Activated CD8-positive, alpha-beta T cell treated with anti-CD3 and anti-CD28 coated beads for 36 hours (primary cell): ENCODE measurements at regions of chr3 and their contacts with region 1.

Region 1: GRCh38 chr3:14113965-14114635 is 10.6 kb downstream of the CHCHD4 start:
- DNase-seq: no peak
- ATAC-seq: no peak
- H3K4me3 Mint-ChIP-seq: no peak overlapping the region
- H3K27ac Mint-ChIP-seq: no peak overlapping the region
- H3K4me1 Mint-ChIP-seq: peaks cover 3% of the 10 kb centered on the region
- H3K27me3 Mint-ChIP-seq: no peaks in the 10 kb centered on the region
- CTCF ChIP-seq: peak; percentile 12

Region 2: GRCh38 chr3:13895155-13896105 is 218.7 kb before region 1 on chr3:
- CTCF ChIA-PET with region 1: interaction called, 14 read pairs
- POLR2A ChIA-PET with region 1: no interaction called
- intact Hi-C with region 1: no loop called
- DNase-seq: peak; percentile 98
- ATAC-seq: peak; percentile 99
- H3K4me3 Mint-ChIP-seq: peak overlapping the region; percentile 83
- H3K27ac Mint-ChIP-seq: peak overlapping the region; percentile 76
- H3K4me1 Mint-ChIP-seq: peaks cover 22% of the 10 kb centered on the region
- H3K27me3 Mint-ChIP-seq: no peaks in the 10 kb centered on the region
- CTCF ChIP-seq: no peak

Region 3: DNA sequence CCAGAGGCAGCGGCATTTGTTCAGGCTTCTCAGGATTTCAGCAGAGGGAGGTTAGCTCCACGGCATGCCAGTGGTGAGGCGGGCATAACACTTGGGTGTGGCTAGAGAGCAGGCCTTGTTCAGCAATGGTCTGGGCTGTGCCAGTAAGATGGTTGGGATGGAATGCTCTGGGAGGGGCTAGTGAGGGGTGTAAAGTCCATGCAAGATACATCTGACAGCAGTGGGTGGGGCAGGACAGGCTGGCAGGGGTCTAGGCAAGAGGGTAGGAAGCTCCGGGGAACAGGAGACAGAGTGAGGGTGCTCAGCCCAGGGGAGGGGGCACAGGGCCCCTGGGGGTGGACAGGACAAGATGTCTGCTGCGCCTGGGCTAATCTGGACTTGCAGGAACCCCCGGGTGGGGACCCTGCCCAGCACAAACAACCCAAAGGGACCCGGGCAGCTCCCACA is 19.2 kb after region 1 on chr3:
- CTCF ChIA-PET with region 1: no interaction called
- POLR2A ChIA-PET with region 1: no interaction called
- intact Hi-C with region 1: no loop called
- DNase-seq: no peak
- ATAC-seq: no peak
- H3K4me3 Mint-ChIP-seq: no peak overlapping the region
- H3K27ac Mint-ChIP-seq: no peak overlapping the region
- H3K4me1 Mint-ChIP-seq: peaks cover 1% of the 10 kb centered on the region
- H3K27me3 Mint-ChIP-seq: no peaks in the 10 kb centered on the region
- CTCF ChIP-seq: no peak